Activated T-helper 2 cell treated with anti-CD3 and anti-CD28 coated beads, Interferon-gamma antibody, Interleukin-2, Interleukin-4, amounts not matched to agents 10 μg/mL and 5 μg/mL and 100 μg/mL, durations not matched to agents 14 hours and 24 hours and 36 hours (primary cell): ENCODE measurements at regions of chr6 and their contacts with region 1.

Region 1: DNA sequence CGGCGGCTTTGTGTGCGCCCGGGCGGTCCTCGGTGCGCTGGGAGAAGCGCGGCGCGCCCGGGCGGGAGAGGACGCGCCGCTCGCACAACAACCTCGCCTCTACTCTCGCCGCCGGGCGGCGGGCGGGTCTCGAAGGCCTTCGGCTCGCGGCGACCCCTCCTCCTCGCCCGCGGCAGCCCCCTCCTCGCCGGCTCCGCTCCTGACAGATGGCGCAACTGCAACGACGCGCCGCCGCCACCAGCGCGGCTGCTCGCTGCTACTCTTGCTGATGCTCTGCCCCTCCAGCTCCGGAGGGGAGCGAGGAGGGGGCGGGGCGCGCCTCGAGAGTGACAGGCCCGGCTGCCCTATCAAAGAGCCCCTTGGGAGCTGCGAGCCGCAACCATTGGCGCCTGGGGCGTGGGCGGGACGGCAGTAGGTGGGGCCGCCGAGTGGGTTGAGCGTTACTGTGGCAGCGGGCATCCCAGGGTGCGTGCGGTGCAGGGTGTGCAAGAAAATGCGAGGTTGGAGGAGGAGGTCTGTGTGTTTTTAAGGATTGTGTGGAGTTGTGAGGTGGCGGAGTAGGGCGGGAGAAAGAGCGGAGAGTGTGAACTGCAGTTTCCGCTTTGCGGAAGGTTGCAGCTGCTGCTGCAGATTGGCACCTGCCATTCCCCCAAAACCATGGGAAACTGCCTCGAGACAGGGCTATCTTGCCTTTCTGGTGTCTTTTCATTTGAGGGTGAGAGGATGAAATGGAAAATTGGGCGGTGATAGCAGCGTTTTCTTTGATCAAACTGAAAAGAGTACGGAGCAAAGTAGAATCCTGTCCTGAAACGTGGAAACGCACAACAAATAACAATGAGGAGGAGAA is at the start of gene FYN:
- DNase-seq: peak; percentile 98
- H3K4me3 Mint-ChIP-seq: peak within 1 kb of the TSS; percentile 97
- H3K27ac Mint-ChIP-seq: peak within 1 kb of the TSS; percentile 94
- H3K4me1 Mint-ChIP-seq: peaks cover 40% of the 10 kb centered on the region
- H3K27me3 Mint-ChIP-seq: peaks cover 2% of the 10 kb centered on the region
- total RNA-seq, gene FYN: 359 TPM in 2 replicates

Region 2: DNA sequence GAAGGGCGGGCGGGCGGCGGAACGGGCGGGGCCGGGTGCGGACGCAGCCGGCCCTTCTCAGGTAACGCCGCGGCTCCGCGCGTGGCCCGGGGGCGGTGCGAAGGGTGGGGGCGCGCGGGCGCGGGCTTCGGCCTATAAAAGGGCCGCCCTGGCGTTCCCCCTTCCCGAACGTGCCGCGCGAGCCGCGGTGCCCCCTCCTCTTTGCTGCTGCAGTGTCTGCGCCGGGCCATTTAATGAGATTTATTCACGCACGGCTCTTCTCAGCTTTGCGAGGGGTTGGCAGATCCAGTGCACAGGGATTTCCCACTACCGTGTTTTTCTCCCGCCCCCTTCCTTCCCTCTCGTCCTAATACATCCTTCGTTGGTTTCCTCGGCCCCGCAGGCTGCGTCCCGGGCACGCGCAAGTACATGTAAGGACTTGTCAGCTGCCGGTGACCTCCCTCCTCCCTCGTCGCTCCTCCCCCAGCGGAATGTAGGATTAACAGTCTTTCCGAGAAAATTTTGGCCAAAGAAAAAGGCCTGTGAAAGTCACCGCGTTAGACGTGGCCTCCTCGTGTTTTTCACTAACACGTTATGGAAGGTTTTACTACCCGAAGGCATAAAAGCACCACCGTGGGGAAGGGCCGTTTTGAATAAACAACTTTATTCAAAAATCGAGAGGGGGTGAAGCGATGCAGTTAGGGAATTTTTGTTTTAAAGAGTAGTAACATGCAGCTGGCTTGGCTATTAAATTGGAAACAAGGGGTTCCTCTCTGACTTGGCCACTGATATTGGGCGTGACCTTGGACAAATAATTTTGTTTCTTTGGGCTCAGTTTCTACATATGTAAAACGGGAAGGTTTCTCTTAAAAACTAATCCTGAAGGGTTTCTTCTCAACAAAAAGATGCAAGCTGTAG is 389.4 kb before region 1 on chr6:
- intact Hi-C with region 1: loop called (anchors 5 kb)
- DNase-seq: no peak
- H3K4me3 Mint-ChIP-seq: peak overlapping the region; percentile 91
- H3K27ac Mint-ChIP-seq: peak overlapping the region; percentile 96
- H3K4me1 Mint-ChIP-seq: peaks cover 50% of the 10 kb centered on the region
- H3K27me3 Mint-ChIP-seq: no peaks in the 10 kb centered on the region

Region 3: GRCh38 chr6:111750753-111751684 is 122.4 kb before region 1 on chr6:
- intact Hi-C with region 1: loop called (anchors 2 kb)
- DNase-seq: peak; percentile 53
- H3K4me3 Mint-ChIP-seq: peak overlapping the region; percentile 50
- H3K27ac Mint-ChIP-seq: peak overlapping the region; percentile 96
- H3K4me1 Mint-ChIP-seq: peaks cover 80% of the 10 kb centered on the region
- H3K27me3 Mint-ChIP-seq: no peaks in the 10 kb centered on the region

Region 4: DNA sequence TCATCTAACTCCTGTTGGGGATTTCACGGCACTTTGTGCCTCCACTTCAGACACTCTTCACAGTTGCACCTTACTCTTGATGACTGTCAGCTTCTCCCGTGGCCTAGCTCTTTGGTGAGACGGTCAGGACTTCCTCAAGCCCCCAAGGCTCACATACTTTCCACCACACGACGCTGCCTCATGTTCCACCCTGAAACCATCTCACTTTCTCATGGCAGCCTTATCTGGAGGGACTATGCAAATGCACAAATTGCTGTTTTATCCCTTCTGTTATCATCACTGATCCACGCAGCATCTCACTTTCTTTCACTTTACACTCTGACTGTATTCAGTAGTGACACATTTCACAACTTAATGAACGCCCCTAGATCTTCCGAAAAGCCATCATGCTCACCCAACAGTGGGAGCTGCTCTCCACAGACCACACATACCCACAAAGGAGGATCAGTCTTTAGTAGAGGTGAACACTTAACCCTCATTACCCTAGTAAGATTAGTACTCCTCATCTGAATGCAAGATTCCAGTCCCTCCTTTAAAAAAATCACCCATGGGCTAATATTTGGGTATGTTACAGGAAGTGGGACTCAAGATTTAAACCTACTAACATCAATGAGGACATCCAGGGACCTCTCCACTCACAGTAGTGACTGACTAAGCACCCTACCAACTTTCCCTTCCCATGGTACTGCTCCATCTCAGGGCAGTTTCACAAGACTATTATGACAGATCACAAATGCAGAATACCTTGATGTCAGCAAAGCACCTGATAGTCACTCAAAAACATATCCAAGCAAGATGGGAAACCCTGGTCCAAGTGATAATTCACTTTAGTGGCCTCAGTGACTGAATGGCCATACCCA is 35.5 kb before region 1 on chr6:
- intact Hi-C with region 1: loop called (anchors 1 kb)
- DNase-seq: peak; percentile 59
- H3K4me3 Mint-ChIP-seq: peak overlapping the region; percentile 77
- H3K27ac Mint-ChIP-seq: peak overlapping the region; percentile 97
- H3K4me1 Mint-ChIP-seq: peaks cover 67% of the 10 kb centered on the region
- H3K27me3 Mint-ChIP-seq: no peaks in the 10 kb centered on the region

Region 5: GRCh38 chr6:111861431-111861885 is 11.9 kb before region 1 on chr6:
- intact Hi-C with region 1: no loop called
- DNase-seq: no peak
- H3K4me3 Mint-ChIP-seq: peak overlapping the region; percentile 15
- H3K27ac Mint-ChIP-seq: peak overlapping the region; percentile 44
- H3K4me1 Mint-ChIP-seq: peaks cover 89% of the 10 kb centered on the region
- H3K27me3 Mint-ChIP-seq: no peaks in the 10 kb centered on the region

Region 6: DNA sequence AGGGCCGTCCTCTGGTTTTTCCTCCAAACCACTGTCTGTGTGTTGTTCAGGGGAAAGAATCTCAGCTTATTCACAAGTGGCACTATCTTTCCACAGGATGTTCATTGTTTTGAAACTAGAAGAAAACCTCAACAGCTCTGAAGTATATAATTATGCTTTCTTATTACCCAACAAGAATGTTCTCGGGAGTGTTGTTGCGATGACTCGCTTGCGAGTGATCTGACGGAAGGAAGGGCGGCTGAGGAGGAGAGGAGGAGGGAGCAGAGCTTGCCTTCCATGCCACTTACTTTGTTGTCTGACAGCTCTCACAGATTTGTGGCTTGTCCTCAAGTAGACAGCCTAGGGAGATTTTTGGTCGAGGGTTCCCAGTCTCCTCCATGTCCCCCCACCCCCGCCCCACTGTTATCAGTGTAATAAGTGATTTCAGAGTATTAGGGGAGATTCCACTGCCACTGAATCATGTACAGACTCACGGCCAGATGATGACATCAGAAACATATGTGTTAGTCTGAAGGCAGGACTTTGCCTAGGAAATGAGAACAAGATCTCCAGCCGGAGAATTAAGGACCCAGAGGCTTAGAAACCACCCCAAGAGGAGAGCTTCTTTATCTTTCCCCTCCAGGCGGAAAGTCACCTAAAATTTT is 99.8 kb after region 1 on chr6:
- intact Hi-C with region 1: loop called (anchors 1 kb)
- DNase-seq: peak; percentile 24
- H3K4me3 Mint-ChIP-seq: peak overlapping the region; percentile 24
- H3K27ac Mint-ChIP-seq: peak overlapping the region; percentile 70
- H3K4me1 Mint-ChIP-seq: peaks cover 53% of the 10 kb centered on the region
- H3K27me3 Mint-ChIP-seq: peaks cover 13% of the 10 kb centered on the region

Region 7: DNA sequence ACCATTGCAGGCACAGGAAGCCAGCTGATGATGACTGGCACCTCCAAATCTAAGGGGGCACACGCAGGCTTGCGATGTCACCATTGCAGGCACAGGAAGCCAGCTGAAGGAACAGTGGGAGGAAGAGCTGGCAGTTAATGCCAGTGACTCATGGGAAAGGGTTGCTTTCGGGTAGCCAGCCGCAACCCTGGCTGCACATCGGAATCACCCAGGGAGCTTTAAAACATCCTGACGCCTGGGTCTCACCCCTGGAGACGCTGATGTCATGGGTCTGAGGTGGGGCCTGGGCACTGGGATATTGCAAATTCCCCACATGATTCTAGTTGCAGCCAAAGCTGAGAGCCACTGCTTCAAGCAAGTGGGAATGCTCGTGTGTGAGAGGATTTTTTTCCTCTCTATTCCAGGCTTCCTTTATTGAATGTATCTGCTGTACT is 164.4 kb after region 1 on chr6:
- intact Hi-C with region 1: loop called (anchors 2 kb)
- DNase-seq: no peak
- H3K4me3 Mint-ChIP-seq: no peak overlapping the region
- H3K27ac Mint-ChIP-seq: peak overlapping the region; percentile 29
- H3K4me1 Mint-ChIP-seq: peaks cover 67% of the 10 kb centered on the region
- H3K27me3 Mint-ChIP-seq: no peaks in the 10 kb centered on the region